ENCODE measurements at regions of chr1 and their contacts with region 1.

Region 1: DNA sequence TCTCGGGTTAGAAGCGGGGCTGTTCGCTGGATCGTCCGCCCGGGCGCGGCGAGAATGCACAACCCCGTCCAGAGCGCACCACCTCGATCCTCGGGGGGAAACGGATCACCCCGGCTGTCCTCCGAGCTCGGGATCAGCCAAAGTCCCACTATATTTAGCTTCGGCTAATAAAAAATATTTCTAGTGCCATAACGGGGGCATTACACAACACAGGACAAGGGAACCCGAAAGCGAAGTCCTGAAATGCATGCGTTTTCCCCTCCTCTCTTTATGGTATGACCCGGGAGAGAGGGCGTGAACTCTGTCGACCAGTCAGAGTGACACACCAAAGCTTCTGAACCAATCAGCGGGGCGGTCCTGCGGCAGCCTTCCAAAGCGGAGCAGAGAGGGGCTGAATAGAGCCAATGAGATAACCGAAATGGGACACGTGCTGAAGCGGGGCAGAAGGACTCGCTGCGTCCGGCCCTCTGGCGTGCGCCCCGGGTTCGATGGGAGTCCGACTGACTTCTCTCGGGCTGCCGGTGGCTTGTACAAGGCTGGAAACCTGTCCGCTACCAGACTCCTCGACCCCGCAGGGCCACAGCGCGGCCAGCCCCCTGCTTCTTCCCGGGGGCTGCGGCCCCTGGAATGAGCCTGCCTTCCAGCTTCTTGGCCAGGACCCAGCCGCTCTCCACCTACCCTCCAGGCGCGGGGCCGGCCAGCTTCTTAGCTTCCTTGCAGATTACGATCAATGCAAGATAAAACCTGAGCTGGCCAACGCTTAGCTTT is at the start of gene ALDH4A1:
- DNase-seq: peak; percentile 98
- H3K4me3 ChIP-seq: peak within 1 kb of the TSS; percentile 82 to 90 (median 83)
- H3K27ac ChIP-seq: peak within 1 kb of the TSS; percentile 88
- H3K4me1 ChIP-seq: peaks cover 22% of the 10 kb centered on the region
- H3K27me3 ChIP-seq: no peaks in the 10 kb centered on the region
- CTCF ChIP-seq: peak in 1 of 2 donors; percentile 0
- POLR2A ChIP-seq: peak; percentile 49
- total RNA-seq, gene ALDH4A1: 17.4 and 18.6 TPM in 2 replicates

Region 2: GRCh38 chr1:17236779-17237560 is 1665.7 kb before region 1 on chr1:
- CTCF ChIA-PET with region 1: no interaction called
- POLR2A ChIA-PET with region 1: no interaction called
- dilution Hi-C with region 1: no loop called
- intact Hi-C with region 1: loop called (anchors 5 kb)
- DNase-seq: peak; percentile 77
- H3K4me3 ChIP-seq: no peak overlapping the region
- H3K27ac ChIP-seq: no peak overlapping the region
- H3K4me1 ChIP-seq: peaks cover 18% of the 10 kb centered on the region
- H3K27me3 ChIP-seq: peaks cover 3% of the 10 kb centered on the region in 2 experiments
- CTCF ChIP-seq: peak; percentile 78 to 86
- POLR2A ChIP-seq: no peak

Region 3: GRCh38 chr1:18926315-18927081 is 23.8 kb after region 1 on chr1:
- CTCF ChIA-PET with region 1: interaction called, 31 read pairs
- POLR2A ChIA-PET with region 1: no interaction called
- dilution Hi-C with region 1: no loop called
- intact Hi-C with region 1: loop called (anchors 1 kb)
- DNase-seq: peak; percentile 95
- H3K4me3 ChIP-seq: no peak overlapping the region
- H3K27ac ChIP-seq: peak overlapping the region; percentile 97
- H3K4me1 ChIP-seq: peaks cover 66% of the 10 kb centered on the region
- H3K27me3 ChIP-seq: no peaks in the 10 kb centered on the region
- CTCF ChIP-seq: no peak
- POLR2A ChIP-seq: peak; percentile 44

Region 4: DNA sequence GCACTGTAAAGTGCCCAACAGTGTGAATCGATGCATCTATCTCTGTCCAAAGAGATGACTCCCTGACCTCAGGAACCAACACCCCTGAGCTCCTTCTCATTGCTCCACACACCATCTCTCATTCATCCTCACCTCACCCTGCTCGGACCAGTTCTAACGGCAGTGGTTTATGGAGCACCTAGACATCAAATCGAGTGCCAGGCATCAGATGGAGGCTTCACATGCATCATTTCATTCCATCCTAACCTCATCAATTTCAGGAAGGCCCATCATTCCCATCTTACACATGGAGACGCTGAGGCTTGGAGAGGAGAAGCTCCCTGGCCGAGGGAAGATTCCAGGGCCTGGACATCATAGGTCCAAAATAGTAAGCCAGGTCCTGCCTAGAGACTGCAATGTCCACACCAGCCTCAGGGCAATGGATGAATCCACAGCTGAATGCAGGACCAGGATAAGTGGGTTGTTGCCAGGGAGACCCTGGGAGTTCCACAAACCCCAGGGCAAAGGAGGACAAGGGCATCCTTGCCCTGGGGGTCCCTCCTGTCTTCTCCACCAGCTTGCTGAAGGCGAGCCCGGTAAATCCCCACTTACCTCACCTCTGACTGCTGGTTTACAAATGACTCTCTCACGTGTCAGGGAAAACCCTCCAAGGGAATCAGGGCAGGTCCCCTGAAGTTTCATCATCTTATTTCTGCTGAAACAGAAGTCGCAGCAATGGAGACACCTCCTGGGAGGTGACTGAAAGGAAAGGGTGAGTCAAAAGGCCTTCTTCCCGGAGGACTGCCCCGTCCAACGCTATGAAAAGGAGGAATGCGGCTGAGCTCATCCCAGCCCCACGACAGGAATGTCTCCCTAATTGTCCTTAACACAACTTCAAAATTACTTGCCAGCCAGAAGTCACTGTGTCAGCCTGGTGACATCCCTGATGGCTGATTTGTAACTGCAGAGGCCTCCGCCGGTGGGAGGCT is 62.8 kb after region 1 on chr1:
- CTCF ChIA-PET with region 1: interaction called, 18 read pairs
- POLR2A ChIA-PET with region 1: no interaction called
- dilution Hi-C with region 1: no loop called
- intact Hi-C with region 1: no loop called
- DNase-seq: no peak
- H3K4me3 ChIP-seq: no peak overlapping the region
- H3K27ac ChIP-seq: no peak overlapping the region
- H3K4me1 ChIP-seq: no peaks in the 10 kb centered on the region
- H3K27me3 ChIP-seq: peaks cover 1 to 2% of the 10 kb centered on the region in 2 experiments
- CTCF ChIP-seq: no peak
- POLR2A ChIP-seq: no peak

Region 5: GRCh38 chr1:19074902-19075721 is 172.4 kb after region 1 on chr1:
- CTCF ChIA-PET with region 1: interaction called, 11 read pairs
- POLR2A ChIA-PET with region 1: no interaction called
- dilution Hi-C with region 1: no loop called
- intact Hi-C with region 1: no loop called
- DNase-seq: no peak
- H3K4me3 ChIP-seq: no peak overlapping the region
- H3K27ac ChIP-seq: no peak overlapping the region
- H3K4me1 ChIP-seq: no peaks in the 10 kb centered on the region
- H3K27me3 ChIP-seq: no peaks in the 10 kb centered on the region
- CTCF ChIP-seq: no peak
- POLR2A ChIP-seq: no peak

Region 6: GRCh38 chr1:19096036-19096833 is 193.5 kb after region 1 on chr1:
- CTCF ChIA-PET with region 1: interaction called, 84 read pairs
- POLR2A ChIA-PET with region 1: no interaction called
- dilution Hi-C with region 1: no loop called
- intact Hi-C with region 1: loop called (anchors 1 kb)
- DNase-seq: peak; percentile 55
- H3K4me3 ChIP-seq: no peak overlapping the region
- H3K27ac ChIP-seq: no peak overlapping the region
- H3K4me1 ChIP-seq: no peaks in the 10 kb centered on the region
- H3K27me3 ChIP-seq: no peaks in the 10 kb centered on the region
- CTCF ChIP-seq: peak; percentile 41 to 68
- POLR2A ChIP-seq: no peak

Region 7: DNA sequence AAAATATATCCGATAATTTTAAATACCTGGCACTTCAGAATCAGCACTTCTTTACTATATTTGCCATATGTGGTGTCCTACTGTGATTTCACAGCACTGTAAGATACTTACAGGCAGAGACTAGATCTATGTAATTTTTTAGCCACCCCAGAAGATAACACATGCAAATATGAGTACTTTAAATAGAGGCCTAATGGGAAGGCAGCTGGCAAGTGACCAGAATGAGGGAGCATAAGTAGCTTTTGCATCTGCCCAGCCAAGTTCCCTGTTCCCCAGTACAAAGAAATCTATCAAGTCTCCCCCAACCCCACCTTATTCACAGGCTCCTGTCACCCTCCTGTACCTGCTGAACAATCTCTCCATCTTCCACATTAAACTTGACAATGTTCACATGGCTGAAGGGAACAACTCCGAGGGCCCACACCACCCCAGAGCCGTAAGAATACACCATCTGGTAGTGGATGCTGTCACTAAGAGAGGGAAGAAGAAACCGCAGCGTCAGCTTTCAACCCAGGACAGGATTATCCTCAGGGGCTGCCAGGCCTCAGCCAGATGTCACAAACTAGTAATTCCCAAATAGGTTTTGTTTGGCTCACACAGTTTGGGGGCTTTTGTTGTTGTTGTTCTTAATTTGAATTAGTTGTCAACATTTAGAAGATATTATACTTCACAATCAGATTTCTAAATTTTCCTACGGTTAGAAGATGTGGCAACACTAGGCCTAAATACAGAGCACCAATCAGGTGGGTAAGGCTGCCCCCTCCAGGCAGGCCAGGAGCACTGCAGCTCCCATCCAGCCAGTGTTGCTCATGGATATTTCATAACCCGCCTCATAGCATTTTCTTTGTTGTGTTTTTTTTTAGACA is 338.2 kb after region 1 on chr1:
- CTCF ChIA-PET with region 1: no interaction called
- POLR2A ChIA-PET with region 1: no interaction called
- dilution Hi-C with region 1: no loop called
- intact Hi-C with region 1: loop called (anchors 5 kb)
- DNase-seq: peak; percentile 54
- H3K4me3 ChIP-seq: no peak overlapping the region
- H3K27ac ChIP-seq: no peak overlapping the region
- H3K4me1 ChIP-seq: no peaks in the 10 kb centered on the region
- H3K27me3 ChIP-seq: no peaks in the 10 kb centered on the region
- CTCF ChIP-seq: peak; percentile 89
- POLR2A ChIP-seq: no peak

Measured in endothelial cell of umbilical vein (primary cell).